ENCODE measurements at regions of chr1 and their contacts with region 1.

Region 1: GRCh38 chr1:32984455-32985171 is 20.0 kb upstream of the RNF19B start:
- DNase-seq: peak; percentile 57
- H3K4me3 Mint-ChIP-seq: no peak overlapping the region
- H3K27ac Mint-ChIP-seq: peak overlapping the region; percentile 58
- H3K4me1 Mint-ChIP-seq: peaks cover 67% of the 10 kb centered on the region
- H3K27me3 Mint-ChIP-seq: no peaks in the 10 kb centered on the region

Region 2: GRCh38 chr1:32702599-32703478 is 281.8 kb before region 1 on chr1 and contains the start of gene SYNC:
- CTCF ChIA-PET with region 1: no interaction called
- DNase-seq: peak; percentile 47
- H3K4me3 Mint-ChIP-seq: peak within 1 kb of the TSS; percentile 3
- H3K27ac Mint-ChIP-seq: no peak within 1 kb of the TSS
- H3K4me1 Mint-ChIP-seq: peaks cover 10% of the 10 kb centered on the region
- H3K27me3 Mint-ChIP-seq: peaks cover 88% of the 10 kb centered on the region

Region 3: GRCh38 chr1:33001282-33001681 is 16.7 kb after region 1 on chr1:
- CTCF ChIA-PET with region 1: interaction called, 11 read pairs
- DNase-seq: no peak
- H3K4me3 Mint-ChIP-seq: no peak overlapping the region
- H3K27ac Mint-ChIP-seq: no peak overlapping the region
- H3K4me1 Mint-ChIP-seq: peaks cover 15% of the 10 kb centered on the region
- H3K27me3 Mint-ChIP-seq: no peaks in the 10 kb centered on the region